ENCODE measurements at regions of chr15 and their contacts with region 1.

Region 1: GRCh38 chr15:61834076-61834697 is 226.1 kb downstream of the VPS13C start:
- DNase-seq: peak; percentile 52
- ATAC-seq: peak; percentile 85
- H3K4me3 ChIP-seq: no peak overlapping the region
- H3K27ac ChIP-seq: no peak overlapping the region
- H3K4me1 ChIP-seq: no peaks in the 10 kb centered on the region
- H3K27me3 ChIP-seq: no peaks in the 10 kb centered on the region
- CTCF ChIP-seq: peak; percentile 43 to 96 (median 95); a peak in 5 of 6 replicates
- POLR2A ChIP-seq: no peak
- RAD21 ChIP-seq: peak; percentile 72

Region 2: DNA sequence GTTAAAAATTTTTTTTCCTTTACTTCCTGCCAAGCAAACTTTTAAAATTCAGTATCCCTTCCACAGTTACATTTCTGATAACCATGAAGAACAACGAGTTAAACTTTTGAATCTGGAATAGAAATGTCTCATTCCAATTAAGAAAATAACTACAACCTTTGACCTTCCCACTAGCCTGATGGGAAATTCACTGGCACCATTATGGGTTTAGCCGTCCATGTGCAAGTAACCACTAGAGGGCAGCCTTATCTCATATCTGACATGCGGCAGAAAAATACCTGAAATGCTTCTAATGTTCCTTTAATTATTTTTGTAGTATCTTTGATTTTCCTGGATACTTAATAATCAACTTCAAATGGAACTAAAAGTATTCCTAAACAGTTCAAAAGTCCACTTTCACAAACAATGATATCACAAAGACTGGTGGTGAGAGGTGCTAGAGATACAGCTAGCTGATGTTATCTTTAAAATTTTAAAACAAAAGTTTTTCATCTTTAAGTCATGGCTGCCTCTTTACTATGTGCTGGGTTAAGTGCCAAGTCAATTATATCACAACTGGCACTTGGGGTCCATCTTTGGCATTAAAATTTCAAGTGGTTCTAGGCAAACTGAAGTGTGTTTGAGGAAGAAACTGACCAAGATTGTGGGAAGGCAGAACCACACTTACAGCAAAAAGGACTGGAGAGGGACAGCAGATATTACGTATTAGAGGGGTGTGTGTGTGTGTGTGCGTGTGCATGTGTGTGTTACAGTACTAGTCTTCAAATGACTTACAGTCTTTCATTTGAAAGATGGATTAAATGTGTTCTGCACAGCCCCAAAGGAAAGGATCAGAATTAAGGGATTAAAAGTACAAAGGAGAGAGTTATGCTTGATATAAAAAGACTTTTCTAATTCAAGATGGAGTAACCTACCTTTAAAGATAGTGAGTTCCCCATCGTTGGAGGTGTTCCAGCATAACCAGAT is 1248.2 kb before region 1 on chr15:
- CTCF ChIA-PET with region 1: interaction called, 43 read pairs
- POLR2A ChIA-PET with region 1: no interaction called
- RAD21 ChIA-PET with region 1: no interaction called
- intact Hi-C with region 1: loop called (anchors 1 kb)
- DNase-seq: peak; percentile 57
- ATAC-seq: peak; percentile 83
- H3K4me3 ChIP-seq: no peak overlapping the region
- H3K27ac ChIP-seq: no peak overlapping the region
- H3K4me1 ChIP-seq: no peaks in the 10 kb centered on the region
- H3K27me3 ChIP-seq: peaks cover 48% of the 10 kb centered on the region
- CTCF ChIP-seq: peak; percentile 71 to 96 (median 84); a peak in 5 of 6 replicates
- POLR2A ChIP-seq: no peak
- RAD21 ChIP-seq: peak; percentile 81

Region 3: GRCh38 chr15:61169904-61170695 is 664.1 kb before region 1 on chr15:
- CTCF ChIA-PET with region 1: interaction called, 36 read pairs
- POLR2A ChIA-PET with region 1: no interaction called
- RAD21 ChIA-PET with region 1: interaction called, 3 to 6 read pairs
- intact Hi-C with region 1: loop called (anchors 1 kb)
- DNase-seq: no peak
- ATAC-seq: no peak
- H3K4me3 ChIP-seq: no peak overlapping the region
- H3K27ac ChIP-seq: no peak overlapping the region
- H3K4me1 ChIP-seq: no peaks in the 10 kb centered on the region
- H3K27me3 ChIP-seq: no peaks in the 10 kb centered on the region; the same call in 1 of the 2 replicates
- CTCF ChIP-seq: no peak
- POLR2A ChIP-seq: no peak
- RAD21 ChIP-seq: no peak

Region 4: DNA sequence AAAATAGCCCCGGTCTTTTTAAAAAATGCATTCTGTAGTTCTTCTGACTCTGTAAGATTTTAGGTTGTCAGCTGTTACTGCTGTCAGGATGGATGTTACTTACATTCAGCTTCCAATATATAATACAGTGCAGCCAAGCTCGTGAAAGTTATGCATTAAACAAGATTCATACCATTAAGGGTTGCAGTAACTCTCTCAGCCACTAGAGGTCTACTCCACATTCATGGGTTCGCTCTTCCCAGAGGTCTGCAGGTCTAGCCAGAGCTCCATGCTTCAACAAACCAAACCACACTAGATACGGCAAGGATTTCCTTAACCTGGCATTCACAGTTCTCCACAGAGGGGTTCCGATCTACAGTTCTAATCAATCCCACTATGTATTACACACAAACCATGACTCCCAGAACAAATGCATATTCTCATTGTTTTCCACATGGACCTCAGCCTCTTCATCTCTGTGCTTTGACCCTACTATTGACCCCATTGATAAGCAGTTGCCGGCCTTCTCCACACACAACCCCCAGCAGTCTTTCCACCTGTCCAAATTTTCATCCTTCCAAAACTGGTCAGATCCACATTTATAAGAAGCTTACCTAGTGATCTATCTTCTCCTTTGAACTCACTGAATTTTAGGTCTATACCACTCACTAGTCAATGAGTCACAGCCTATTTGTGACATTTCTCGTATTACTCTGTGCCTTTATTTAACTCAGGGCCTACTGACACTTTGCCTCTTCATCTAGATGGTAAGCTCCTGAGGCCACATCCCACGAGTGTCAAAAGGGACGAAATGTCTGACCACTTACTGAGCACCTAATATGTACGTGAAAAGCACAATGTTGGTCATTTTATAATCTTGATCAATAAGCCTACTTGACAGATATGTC is 638.8 kb before region 1 on chr15:
- CTCF ChIA-PET with region 1: interaction called, 22 read pairs
- POLR2A ChIA-PET with region 1: no interaction called
- RAD21 ChIA-PET with region 1: no interaction called
- intact Hi-C with region 1: loop called (anchors 1 kb)
- DNase-seq: peak; percentile 26
- ATAC-seq: peak; percentile 59; the same call in 1 of the 2 replicates
- H3K4me3 ChIP-seq: no peak overlapping the region
- H3K27ac ChIP-seq: no peak overlapping the region
- H3K4me1 ChIP-seq: no peaks in the 10 kb centered on the region
- H3K27me3 ChIP-seq: peaks cover 16% of the 10 kb centered on the region; the same call in 1 of the 2 replicates
- CTCF ChIP-seq: peak in 2 of 3 experiments; percentile 68 to 70; a peak in 4 of 6 replicates
- POLR2A ChIP-seq: no peak
- RAD21 ChIP-seq: peak; percentile 20; the same call in 1 of the 2 replicates

Region 5: DNA sequence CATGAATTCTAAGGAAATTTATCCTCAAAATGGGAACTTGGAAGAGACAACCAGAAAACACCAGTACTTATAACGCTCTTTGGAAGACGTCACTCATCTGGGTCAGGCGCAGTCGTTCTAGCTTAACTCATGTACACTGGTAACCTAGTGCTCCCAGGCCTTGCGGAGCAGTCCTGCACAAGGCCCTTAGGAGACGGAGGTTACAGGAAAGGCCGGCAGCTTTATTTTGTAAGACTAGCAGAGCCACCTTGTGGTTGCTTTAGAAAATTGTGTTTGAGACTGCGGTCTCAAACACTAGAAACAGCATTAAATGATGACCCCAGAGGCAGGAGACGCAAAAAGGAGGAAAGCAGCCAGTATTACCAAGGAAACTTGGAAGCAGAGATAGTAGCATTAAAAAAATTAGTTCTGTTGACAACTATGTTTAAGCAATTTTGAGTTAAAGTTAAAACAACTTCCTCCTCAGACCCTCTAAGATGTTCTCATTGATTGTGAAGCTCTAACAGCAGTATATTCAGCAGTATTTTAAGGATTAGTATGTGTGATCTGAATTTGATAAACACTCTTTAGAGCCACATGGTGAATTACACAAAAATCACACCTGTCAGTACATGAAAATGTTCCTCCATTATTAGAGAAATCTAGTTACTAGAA is 472.8 kb after region 1 on chr15:
- CTCF ChIA-PET with region 1: interaction called, 20 read pairs
- POLR2A ChIA-PET with region 1: no interaction called
- RAD21 ChIA-PET with region 1: no interaction called
- intact Hi-C with region 1: no loop called
- DNase-seq: peak; percentile 68
- ATAC-seq: peak; percentile 99
- H3K4me3 ChIP-seq: no peak overlapping the region
- H3K27ac ChIP-seq: no peak overlapping the region
- H3K4me1 ChIP-seq: no peaks in the 10 kb centered on the region
- H3K27me3 ChIP-seq: 0 out of 2 replicates have a peak, but pooled peaks cover 3% of the 10 kb centered on the region
- CTCF ChIP-seq: peak; percentile 55 to 71 (median 58); a peak in 5 of 6 replicates
- POLR2A ChIP-seq: no peak
- RAD21 ChIP-seq: peak; percentile 75